ENCODE measurements at regions of chr7 and their contacts with region 1.

Region 1: DNA sequence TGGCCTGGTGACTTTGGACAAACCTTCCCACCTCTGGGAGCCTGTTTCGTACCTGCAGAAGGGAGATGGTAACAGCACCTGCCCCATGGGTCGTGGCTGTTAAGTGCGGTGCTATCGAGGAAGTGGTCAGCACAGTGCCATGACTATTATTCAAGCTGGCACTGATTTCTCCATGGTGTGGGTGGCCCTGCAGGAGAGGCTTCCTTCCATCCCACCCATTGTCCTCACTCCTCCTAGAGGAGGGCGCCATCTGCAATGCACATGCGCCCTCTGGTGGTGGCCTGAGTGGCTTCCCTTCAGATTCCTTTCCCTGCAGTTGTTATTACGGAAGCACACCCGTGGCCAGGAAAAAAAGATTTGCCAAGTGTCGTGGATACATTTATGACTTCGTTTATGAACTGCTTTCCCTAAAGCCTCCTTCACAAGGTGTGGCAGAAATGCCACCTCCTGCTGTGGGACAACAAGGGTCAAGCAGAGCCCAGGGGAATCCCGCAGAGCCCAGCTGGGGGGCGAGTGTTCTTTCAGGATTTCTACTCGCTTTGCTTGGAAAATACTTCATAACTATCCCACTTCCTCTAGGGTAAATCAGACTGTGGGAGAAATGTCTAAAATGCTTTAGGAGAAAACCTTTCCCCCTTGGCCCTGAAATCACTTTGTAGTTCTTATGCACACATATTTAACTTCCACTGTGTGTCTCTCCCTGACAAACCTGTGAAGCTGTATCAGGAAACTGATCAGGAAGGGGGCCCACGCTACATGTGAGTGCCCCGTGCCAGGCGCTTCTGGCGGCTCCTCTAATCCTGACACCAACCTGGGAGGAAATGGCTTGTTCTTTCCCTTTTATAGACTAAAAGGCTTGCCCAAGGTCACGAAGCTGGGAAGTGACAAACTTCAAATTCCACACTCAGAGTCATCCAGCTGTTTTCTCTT is 98.0 kb upstream of the ANLN start:
- DNase-seq: peak; percentile 79
- CTCF ChIP-seq: peak; percentile 92

Region 2: DNA sequence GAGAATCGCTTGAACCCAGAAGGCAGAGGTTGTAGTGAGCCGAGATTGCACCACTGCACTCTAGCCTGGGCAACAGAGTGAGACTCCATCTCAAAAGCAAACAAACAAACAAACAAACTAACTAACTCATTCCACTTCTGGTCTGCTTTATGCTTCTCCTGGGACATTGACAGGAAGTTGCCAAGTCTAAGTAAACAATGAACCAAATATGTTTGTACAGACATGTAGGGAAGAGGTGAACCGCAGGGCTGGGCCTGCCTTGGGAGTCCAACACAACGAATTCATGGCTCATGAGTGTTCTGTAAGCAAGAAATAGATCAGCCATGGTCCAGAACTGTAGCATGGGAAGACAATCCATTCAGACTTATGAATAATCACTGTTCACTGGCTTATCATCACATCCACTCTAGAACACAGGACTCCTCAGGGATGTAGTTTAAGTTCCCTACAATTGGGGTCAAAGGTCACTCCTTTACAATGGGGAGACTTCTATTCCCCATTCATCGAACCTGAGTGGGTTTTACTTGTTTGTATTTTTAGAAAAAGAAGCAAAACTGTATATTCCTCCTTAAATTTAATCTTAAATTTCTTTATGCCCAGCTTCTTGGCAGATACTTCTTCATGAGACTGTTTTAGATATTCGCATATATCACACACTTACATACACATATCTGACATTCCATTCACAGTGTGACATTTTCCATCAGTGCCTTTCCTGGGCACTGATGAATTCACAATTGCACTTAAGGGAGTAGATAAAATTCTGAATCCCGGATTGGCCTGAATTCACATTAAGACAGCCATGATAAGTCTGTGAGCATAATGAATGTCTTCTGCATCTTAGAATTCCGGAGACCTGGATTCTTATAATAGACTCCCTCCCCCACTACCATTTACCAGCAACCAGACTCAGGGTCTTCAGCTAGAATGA is 297.7 kb before region 1 on chr7:
- in situ Hi-C with region 1: loop called (anchors 5 kb)
- DNase-seq: no peak
- CTCF ChIP-seq: no peak

Region 3: GRCh38 chr7:36389371-36390198 is 97.9 kb after region 1 on chr7 and contains the start of gene ANLN:
- in situ Hi-C with region 1: no loop called
- DNase-seq: peak; percentile 99
- CTCF ChIP-seq: no peak

Region 4: GRCh38 chr7:36784991-36785940 is 493.6 kb after region 1 on chr7:
- in situ Hi-C with region 1: no loop called
- DNase-seq: peak; percentile 44
- CTCF ChIP-seq: no peak

Measured in GM13976 (cell line).